CD8-positive, alpha-beta T cell (primary cell): ENCODE measurements at regions of chr20 and their contacts with region 1.

Region 1: DNA sequence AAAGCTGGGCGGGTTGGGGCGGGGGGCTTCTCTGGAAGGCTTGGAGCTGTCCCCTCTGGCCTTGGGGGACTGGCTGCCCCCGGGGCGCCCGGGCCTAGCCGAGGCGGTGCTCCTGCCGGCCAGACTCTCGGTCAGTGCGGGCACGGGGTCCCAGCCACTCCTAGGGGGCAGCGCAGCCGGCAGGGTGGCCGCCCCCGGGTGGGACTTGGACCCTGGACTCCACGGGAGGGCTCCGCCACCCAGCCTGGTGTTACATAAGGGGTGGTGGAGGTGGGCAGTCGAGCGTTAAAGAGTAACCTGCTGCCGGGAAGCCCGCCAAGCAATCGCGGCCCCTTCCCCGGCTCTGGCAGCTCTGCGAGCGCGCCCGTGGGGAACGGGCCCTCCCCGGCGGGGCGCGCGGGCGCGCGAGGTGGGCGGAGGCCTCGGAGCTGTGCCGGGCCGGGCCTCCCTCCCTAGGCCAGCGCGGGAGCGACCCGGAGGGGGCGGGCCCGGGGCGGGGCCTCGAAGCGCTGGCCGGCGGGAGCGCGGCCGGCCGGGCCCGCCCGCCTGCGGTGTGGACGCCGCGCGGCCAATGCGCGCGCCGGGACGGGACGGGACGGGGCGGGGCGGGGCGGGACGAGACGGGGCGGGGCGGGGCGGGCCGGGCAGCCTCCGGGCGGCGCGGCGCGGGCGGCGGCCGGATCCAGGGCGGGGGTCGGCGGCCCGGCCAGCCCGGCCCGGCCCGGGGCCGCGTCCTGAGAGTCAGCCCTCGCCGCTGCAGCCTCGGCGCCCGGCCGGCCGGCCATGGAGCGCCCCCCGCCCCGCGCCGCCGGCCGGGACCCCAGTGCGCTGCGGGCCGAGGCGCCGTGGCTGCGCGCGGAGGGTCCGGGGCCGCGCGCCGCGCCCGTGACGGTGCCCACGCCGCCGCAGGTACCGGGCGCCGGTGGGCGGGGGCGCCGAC is at the start of gene SLC2A4RG:
- DNase-seq: peak; percentile 37 to 88 (median 66)
- ATAC-seq: peak; percentile 17
- H3K4me3 ChIP-seq: peak within 1 kb of the TSS; percentile 80 to 94
- H3K4me3 Mint-ChIP-seq: peak within 1 kb of the TSS; percentile 92
- H3K27ac ChIP-seq: peak within 1 kb of the TSS; percentile 40 to 48
- H3K27ac Mint-ChIP-seq: no peak within 1 kb of the TSS
- H3K4me1 ChIP-seq: peaks cover 41% of the 10 kb centered on the region
- H3K4me1 Mint-ChIP-seq: peaks cover 16% of the 10 kb centered on the region
- H3K27me3 ChIP-seq: no peaks in the 10 kb centered on the region
- H3K27me3 Mint-ChIP-seq: no peaks in the 10 kb centered on the region
- CTCF ChIP-seq: no peak
- total RNA-seq, gene SLC2A4RG: 79.3 to 90.0 TPM

Region 2: DNA sequence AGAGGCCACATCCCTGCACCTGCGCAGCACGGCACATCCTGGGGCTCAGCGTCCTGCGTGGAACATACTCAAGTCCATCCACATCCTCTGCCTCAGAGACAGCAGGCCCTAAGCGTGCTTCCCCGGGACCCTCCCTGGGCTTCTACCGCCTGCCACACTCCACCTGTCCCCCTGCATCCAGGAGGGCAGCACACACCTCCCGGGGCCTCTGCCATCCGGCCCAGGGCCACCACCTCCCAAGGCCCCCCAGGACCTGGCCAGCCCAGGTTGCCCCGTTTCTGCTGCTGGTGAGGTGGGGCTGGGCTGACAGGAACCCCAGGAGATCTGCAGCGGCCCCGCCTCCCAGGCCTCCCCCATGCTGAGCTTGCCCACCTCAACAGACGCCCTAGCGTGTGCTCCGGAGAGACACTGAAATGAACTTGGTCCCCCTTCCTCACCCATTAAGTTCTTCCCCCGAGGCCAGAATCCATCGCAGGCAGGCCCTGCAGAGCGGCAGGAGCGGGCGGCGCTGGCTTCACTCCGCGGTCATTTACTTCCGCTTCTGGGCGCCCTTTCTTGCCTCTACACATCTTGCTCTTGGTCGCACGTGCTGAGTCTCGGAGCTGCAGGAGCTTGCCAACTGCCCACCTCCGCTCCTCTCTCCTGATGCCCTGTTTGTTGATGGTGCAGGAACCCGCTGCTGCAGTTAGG is 1909.0 kb before region 1 on chr20:
- CTCF ChIA-PET with region 1: no interaction called
- POLR2A ChIA-PET with region 1: no interaction called
- intact Hi-C with region 1: no loop called
- DNase-seq: no peak
- ATAC-seq: no peak
- H3K4me3 ChIP-seq: no peak overlapping the region
- H3K4me3 Mint-ChIP-seq: no peak overlapping the region
- H3K27ac ChIP-seq: no peak overlapping the region
- H3K27ac Mint-ChIP-seq: no peak overlapping the region
- H3K4me1 ChIP-seq: no peaks in the 10 kb centered on the region
- H3K4me1 Mint-ChIP-seq: no peaks in the 10 kb centered on the region
- H3K27me3 ChIP-seq: no peaks in the 10 kb centered on the region
- H3K27me3 Mint-ChIP-seq: peaks cover 8% of the 10 kb centered on the region
- CTCF ChIP-seq: no peak

Region 3: GRCh38 chr20:63553227-63553932 is 186.0 kb before region 1 on chr20:
- CTCF ChIA-PET with region 1: no interaction called
- POLR2A ChIA-PET with region 1: interaction called, 4 read pairs
- intact Hi-C with region 1: loop called in 1 of 2 experiments (anchors 5 kb)
- DNase-seq: peak; percentile 76 to 93 (median 87)
- ATAC-seq: peak; percentile 81
- H3K4me3 ChIP-seq: peak overlapping the region; percentile 51 to 55
- H3K4me3 Mint-ChIP-seq: peak overlapping the region; percentile 70
- H3K27ac ChIP-seq: peak overlapping the region; percentile 17 to 61
- H3K27ac Mint-ChIP-seq: peak overlapping the region; percentile 89
- H3K4me1 ChIP-seq: peaks cover 19% of the 10 kb centered on the region
- H3K4me1 Mint-ChIP-seq: peaks cover 20% of the 10 kb centered on the region
- H3K27me3 ChIP-seq: peaks cover 0 to 2% of the 10 kb centered on the region in 2 experiments
- H3K27me3 Mint-ChIP-seq: peaks cover 4% of the 10 kb centered on the region
- CTCF ChIP-seq: no peak

Region 4: DNA sequence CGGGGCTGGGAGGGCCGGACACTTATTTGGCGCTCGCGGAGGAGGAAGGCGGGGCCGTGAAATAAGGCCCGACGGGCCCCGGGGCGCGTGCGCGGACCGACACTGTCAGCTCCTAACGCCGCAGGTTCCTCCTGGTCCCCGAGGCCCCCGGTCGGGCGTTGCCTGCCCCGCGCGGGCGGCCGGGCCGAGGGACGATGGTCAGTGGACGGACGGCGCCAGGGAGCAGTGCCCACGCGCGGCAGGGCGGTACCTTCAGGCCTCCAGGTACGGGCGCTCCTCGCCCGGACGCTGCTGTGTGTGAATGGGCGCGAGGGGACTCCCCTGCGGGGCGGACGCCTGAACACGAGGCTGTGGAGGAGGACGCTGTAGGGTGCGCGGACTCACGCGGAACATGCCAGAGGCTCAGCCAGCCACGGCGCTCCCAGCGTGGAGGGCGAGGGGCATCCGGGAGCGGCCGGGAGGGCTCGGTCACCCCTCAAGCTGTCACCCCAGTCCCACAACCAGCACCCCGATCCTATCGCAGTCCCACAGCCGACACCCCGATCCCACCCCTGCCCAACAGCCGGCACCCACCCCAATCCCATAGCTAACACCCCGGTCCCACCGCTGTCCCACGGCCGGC is 112.2 kb before region 1 on chr20:
- CTCF ChIA-PET with region 1: no interaction called
- POLR2A ChIA-PET with region 1: interaction called, 12 read pairs
- intact Hi-C with region 1: loop called in 1 of 2 experiments (anchors 5 kb)
- DNase-seq: peak; percentile 90 to 97 (median 94)
- ATAC-seq: peak; percentile 77
- H3K4me3 ChIP-seq: peak overlapping the region; percentile 91 to 100
- H3K4me3 Mint-ChIP-seq: peak overlapping the region; percentile 97
- H3K27ac ChIP-seq: peak overlapping the region; percentile 81 to 91
- H3K27ac Mint-ChIP-seq: peak overlapping the region; percentile 93
- H3K4me1 ChIP-seq: peaks cover 39% of the 10 kb centered on the region
- H3K4me1 Mint-ChIP-seq: peaks cover 43% of the 10 kb centered on the region
- H3K27me3 ChIP-seq: no peaks in the 10 kb centered on the region
- H3K27me3 Mint-ChIP-seq: no peaks in the 10 kb centered on the region
- CTCF ChIP-seq: no peak

Region 5: DNA sequence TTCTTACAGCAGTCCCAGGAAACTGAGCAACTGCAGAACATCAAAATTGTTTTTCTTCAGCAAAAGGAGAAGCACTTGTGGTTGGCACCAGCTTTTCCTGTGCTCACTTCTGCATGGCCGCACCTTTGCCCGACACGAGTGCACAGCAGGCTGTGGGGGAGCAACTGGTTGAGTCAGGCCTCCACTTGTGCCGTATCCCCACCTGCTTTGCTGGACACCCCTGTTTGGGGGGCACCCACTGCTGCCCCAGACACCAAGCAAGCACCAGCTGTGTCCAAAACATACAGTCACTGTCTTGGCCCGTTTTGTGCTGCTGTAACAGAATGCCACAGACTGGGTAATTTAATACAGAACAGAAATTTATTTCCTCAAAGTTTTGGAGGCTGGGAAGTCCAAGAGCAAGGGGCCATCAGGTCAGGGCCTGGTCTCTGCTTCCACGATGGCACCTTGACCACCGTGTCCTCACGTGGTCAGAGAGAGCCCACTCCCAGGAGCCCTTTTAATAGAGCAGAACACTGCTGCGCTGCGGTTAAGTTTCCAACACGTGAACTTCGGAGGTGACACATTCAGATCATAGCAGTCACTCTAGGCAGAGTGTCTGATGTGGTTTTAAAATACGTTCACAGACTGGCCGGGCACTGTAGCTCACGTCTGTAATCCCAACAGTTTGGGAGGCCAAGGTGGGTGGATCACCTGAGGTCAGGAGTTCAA is 103.8 kb before region 1 on chr20:
- CTCF ChIA-PET with region 1: no interaction called
- POLR2A ChIA-PET with region 1: interaction called, 6 read pairs
- intact Hi-C with region 1: loop called in 1 of 2 experiments (anchors 5 kb)
- DNase-seq: peak; percentile 59 to 95 (median 80)
- ATAC-seq: peak; percentile 51
- H3K4me3 ChIP-seq: peak overlapping the region; percentile 21 to 34
- H3K4me3 Mint-ChIP-seq: peak overlapping the region; percentile 77
- H3K27ac ChIP-seq: peak overlapping the region; percentile 86 to 91
- H3K27ac Mint-ChIP-seq: peak overlapping the region; percentile 100
- H3K4me1 ChIP-seq: peaks cover 75% of the 10 kb centered on the region
- H3K4me1 Mint-ChIP-seq: peaks cover 64% of the 10 kb centered on the region
- H3K27me3 ChIP-seq: no peaks in the 10 kb centered on the region
- H3K27me3 Mint-ChIP-seq: no peaks in the 10 kb centered on the region
- CTCF ChIP-seq: no peak

Region 6: GRCh38 chr20:63689046-63690000 is 50.1 kb before region 1 on chr20:
- CTCF ChIA-PET with region 1: no interaction called
- POLR2A ChIA-PET with region 1: no interaction called
- intact Hi-C with region 1: no loop called
- DNase-seq: no peak
- ATAC-seq: no peak
- H3K4me3 ChIP-seq: no peak overlapping the region
- H3K4me3 Mint-ChIP-seq: no peak overlapping the region
- H3K27ac ChIP-seq: no peak overlapping the region
- H3K27ac Mint-ChIP-seq: no peak overlapping the region
- H3K4me1 ChIP-seq: peaks cover 15% of the 10 kb centered on the region
- H3K4me1 Mint-ChIP-seq: peaks cover 9% of the 10 kb centered on the region
- H3K27me3 ChIP-seq: no peaks in the 10 kb centered on the region
- H3K27me3 Mint-ChIP-seq: no peaks in the 10 kb centered on the region
- CTCF ChIP-seq: no peak

Region 7: DNA sequence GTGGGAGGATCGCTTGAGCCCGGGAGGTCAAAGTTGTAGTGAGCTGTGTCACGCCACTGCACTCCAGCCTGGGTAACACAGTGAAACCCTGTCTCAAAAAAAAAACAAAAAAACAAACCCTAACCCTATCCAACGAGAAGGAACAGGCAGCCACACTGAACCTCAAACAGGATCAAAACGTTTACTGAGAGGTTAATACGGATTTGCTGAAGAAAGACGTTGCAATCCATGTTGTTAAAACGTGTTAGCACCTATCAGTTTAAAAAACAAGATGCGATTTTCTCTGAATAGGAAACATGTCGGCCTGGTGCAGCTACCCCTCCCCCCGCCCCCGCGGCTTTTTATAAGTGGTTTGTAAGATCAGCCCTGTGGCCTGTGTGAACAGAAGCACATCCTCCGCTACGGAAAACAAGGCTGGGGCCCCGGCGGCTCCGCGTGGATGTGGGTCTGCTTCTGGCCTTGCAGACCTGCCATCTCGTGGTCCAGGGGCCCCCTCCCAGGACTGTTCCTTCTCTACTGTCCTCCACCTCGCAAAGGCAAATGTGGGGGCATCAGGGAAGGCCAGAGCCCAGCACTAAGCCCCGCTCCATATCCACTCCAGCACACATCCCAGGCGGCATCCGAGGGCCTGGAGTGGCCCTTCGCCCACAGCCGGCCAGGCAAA is 11.5 kb after region 1 on chr20:
- CTCF ChIA-PET with region 1: interaction called, 11 read pairs
- POLR2A ChIA-PET with region 1: interaction called, 53 read pairs
- intact Hi-C with region 1: loop called (anchors 2 kb)
- DNase-seq: peak in 8 of 9 experiments; percentile 57 to 87 (median 72)
- ATAC-seq: peak; percentile 86
- H3K4me3 ChIP-seq: peak overlapping the region; percentile 2 to 44
- H3K4me3 Mint-ChIP-seq: peak overlapping the region; percentile 77
- H3K27ac ChIP-seq: peak overlapping the region; percentile 23 to 52
- H3K27ac Mint-ChIP-seq: peak overlapping the region; percentile 91
- H3K4me1 ChIP-seq: peaks cover 27% of the 10 kb centered on the region
- H3K4me1 Mint-ChIP-seq: peaks cover 29% of the 10 kb centered on the region
- H3K27me3 ChIP-seq: no peaks in the 10 kb centered on the region
- H3K27me3 Mint-ChIP-seq: no peaks in the 10 kb centered on the region
- CTCF ChIP-seq: no peak

Region 8: GRCh38 chr20:63782051-63782471 is 42.7 kb after region 1 on chr20:
- CTCF ChIA-PET with region 1: interaction called, 4 read pairs
- POLR2A ChIA-PET with region 1: interaction called, 3 read pairs
- intact Hi-C with region 1: loop called (anchors 5 kb)
- DNase-seq: peak in 8 of 9 experiments; percentile 11 to 93 (median 76)
- ATAC-seq: peak; percentile 94
- H3K4me3 ChIP-seq: no peak overlapping the region
- H3K4me3 Mint-ChIP-seq: peak overlapping the region; percentile 39
- H3K27ac ChIP-seq: peak overlapping the region in 1 of 2 experiments; percentile 50
- H3K27ac Mint-ChIP-seq: peak overlapping the region; percentile 81
- H3K4me1 ChIP-seq: peaks cover 12% of the 10 kb centered on the region
- H3K4me1 Mint-ChIP-seq: peaks cover 18% of the 10 kb centered on the region
- H3K27me3 ChIP-seq: no peaks in the 10 kb centered on the region
- H3K27me3 Mint-ChIP-seq: no peaks in the 10 kb centered on the region
- CTCF ChIP-seq: peak; percentile 23

Region 9: DNA sequence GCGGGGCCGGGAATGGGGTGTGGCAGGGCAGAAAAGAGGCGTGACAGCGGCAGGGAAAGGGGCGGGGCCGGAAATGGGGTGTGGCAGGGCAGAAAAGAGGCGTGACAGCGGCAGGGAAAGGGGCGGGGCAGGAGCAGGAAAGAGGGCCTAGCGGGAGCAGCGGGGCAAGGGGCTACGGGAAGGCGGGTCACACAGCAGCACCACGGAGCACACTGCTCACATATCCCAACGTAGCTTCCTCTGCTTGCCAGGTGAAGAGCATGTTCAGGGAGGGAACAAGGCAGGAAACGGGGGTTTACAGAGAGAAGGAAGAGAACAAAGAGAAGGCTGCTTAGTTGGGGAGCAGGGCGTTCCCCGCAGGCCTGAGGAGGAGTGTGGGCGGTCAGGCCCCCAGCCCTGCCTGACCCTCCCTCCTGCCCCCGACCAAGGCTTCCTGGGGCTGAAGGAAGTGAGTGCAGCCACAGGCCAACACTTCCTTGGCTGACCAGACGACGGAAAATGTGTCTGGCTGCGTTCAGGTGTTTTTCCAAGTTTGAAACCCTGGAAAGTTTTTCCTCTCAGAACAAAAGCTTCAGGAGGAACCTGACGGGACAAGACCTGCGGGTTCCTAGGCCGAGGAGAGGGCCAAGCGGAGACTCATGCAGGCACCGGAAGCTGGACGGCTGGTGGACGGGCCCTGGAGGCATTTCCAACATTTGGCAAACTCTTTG is 203.0 kb after region 1 on chr20:
- CTCF ChIA-PET with region 1: no interaction called
- POLR2A ChIA-PET with region 1: no interaction called
- intact Hi-C with region 1: loop called in 1 of 2 experiments (anchors 2 kb)
- DNase-seq: peak in 3 of 9 experiments; percentile 45 to 59 (median 56)
- ATAC-seq: no peak
- H3K4me3 ChIP-seq: no peak overlapping the region
- H3K4me3 Mint-ChIP-seq: peak overlapping the region; percentile 57
- H3K27ac ChIP-seq: peak overlapping the region; percentile 27 to 58
- H3K27ac Mint-ChIP-seq: peak overlapping the region; percentile 45
- H3K4me1 ChIP-seq: peaks cover 23% of the 10 kb centered on the region
- H3K4me1 Mint-ChIP-seq: peaks cover 23% of the 10 kb centered on the region
- H3K27me3 ChIP-seq: no peaks in the 10 kb centered on the region
- H3K27me3 Mint-ChIP-seq: no peaks in the 10 kb centered on the region
- CTCF ChIP-seq: no peak